T-cell (primary cell): ENCODE measurements at regions of chr14 and their contacts with region 1.

Region 1: GRCh38 chr14:22531451-22532344 is 57.3 kb downstream of the DAD1 start:
- DNase-seq: peak in 2 of 35 experiments; percentile 25 to 58
- ATAC-seq: peak; percentile 53 to 63 (median 56)
- H3K4me3 ChIP-seq: peak overlapping the region; percentile 38 to 40
- H3K4me3 Mint-ChIP-seq: peak overlapping the region; percentile 74 to 86 (median 85)
- H3K27ac ChIP-seq: peak overlapping the region; percentile 88
- H3K27ac Mint-ChIP-seq: peak overlapping the region; percentile 93 to 99
- H3K4me1 ChIP-seq: peaks cover 74 to 79% of the 10 kb centered on the region in 2 experiments
- H3K4me1 Mint-ChIP-seq: peaks cover 90 to 91% (median 91%) of the 10 kb centered on the region in 3 donors
- H3K27me3 ChIP-seq: no peaks in the 10 kb centered on the region
- H3K27me3 Mint-ChIP-seq: no peaks in the 10 kb centered on the region

Region 2: DNA sequence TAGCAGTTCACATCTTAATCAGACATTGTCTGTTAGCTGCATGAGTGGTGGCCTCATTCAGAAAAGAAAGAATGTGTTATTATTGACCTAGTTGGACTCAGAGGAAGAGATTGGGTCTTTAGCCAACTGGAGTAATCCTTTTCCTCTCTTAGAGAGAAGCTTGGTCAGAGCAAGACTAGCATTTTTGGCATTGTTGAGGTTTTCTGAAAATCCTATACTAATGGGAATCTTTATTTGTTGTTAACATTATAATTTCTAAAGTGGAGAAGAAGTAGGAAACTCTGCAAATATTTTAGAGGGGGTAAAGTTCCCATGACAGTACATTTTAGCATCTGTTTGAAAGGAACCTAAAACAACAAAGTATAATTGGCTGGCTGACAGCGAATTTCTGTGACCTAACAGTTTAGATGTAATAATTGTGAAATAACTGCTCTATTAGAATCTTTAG is 1045.0 kb before region 1 on chr14:
- CTCF ChIA-PET with region 1: no interaction called
- POLR2A ChIA-PET with region 1: interaction called in 1 of 2 experiments, 14 read pairs
- DNase-seq: no peak
- ATAC-seq: no peak
- H3K4me3 ChIP-seq: no peak overlapping the region
- H3K4me3 Mint-ChIP-seq: no peak overlapping the region
- H3K27ac ChIP-seq: no peak overlapping the region
- H3K27ac Mint-ChIP-seq: no peak overlapping the region
- H3K4me1 ChIP-seq: no peaks in the 10 kb centered on the region
- H3K4me1 Mint-ChIP-seq: peaks cover 8 to 13% (median 11%) of the 10 kb centered on the region in 3 donors
- H3K27me3 ChIP-seq: no peaks in the 10 kb centered on the region
- H3K27me3 Mint-ChIP-seq: no peaks in the 10 kb centered on the region

Region 3: DNA sequence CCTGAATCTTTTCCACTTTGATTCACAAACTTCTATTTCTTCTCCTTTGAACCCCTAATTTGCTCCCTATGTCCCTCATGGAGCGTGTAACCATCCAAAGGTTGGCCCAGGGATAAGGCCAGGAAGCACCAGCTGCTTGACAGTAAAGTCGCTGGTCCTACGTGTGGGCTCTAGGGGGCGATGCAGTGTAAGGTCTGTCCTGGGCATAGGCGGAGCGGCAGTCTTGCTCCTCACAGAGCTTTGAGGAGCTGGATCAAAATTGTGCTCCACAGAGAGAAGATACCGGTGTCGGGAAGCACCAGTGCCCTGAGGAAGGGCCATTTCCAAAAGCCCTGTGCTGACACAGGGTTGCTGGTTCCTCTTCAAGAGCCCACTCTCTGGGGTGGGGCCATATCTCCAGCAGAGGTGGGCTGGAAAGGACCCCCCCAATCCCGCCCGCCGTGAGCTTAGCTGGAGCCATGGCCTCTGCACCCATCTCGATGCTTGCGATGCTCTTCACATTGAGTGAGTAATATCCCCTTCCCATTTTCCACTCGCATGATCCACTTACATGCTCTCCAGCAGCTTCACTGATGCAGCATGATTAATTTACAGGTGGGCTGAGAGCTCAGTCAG is 808.2 kb before region 1 on chr14:
- CTCF ChIA-PET with region 1: no interaction called
- POLR2A ChIA-PET with region 1: interaction called in 1 of 2 experiments, 11 read pairs
- DNase-seq: peak in 30 of 35 experiments; percentile 14 to 67 (median 26)
- ATAC-seq: peak; percentile 68 to 84 (median 76)
- H3K4me3 ChIP-seq: peak overlapping the region; percentile 3 to 36
- H3K4me3 Mint-ChIP-seq: peak overlapping the region; percentile 3 to 75 (median 73)
- H3K27ac ChIP-seq: no peak overlapping the region
- H3K27ac Mint-ChIP-seq: peak overlapping the region; percentile 71 to 73
- H3K4me1 ChIP-seq: no peaks in the 10 kb centered on the region
- H3K4me1 Mint-ChIP-seq: peaks cover 0 to 2% (median 0%) of the 10 kb centered on the region in 3 donors
- H3K27me3 ChIP-seq: peaks cover 2 to 8% of the 10 kb centered on the region in 2 experiments
- H3K27me3 Mint-ChIP-seq: peaks cover 23 to 29% of the 10 kb centered on the region in 2 donors

Region 4: DNA sequence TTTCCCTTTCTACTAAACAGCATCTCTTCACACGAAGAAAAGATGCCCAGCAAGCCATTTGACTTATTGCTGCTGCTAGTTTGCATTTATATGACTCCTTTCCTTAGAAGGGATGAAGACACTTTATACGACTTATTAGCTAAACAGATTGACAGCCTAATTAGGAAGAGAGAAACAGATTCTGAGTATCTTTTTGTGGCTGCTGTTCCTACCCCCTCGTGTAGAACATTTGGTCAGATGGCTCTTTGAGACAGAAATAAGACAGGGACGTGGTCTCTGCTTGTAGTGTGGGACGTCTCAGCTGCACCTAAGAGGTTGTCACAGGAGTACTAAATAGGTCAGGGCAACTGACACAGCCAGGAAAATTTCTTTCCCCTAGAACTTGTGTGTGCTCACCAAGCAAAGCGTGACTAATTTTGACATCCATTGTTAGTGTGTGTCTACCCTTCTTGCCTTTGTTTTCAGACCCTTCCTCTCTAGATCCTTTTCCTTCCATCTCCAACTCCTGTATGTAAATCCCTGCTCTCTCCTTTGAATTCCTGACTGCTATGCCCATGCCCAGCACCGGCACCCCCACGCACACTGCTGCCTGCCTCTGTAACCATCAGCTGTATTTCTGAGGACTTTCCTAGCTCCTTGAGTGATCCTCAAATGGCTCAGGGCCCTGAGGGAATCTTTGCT is 25.9 kb before region 1 on chr14:
- CTCF ChIA-PET with region 1: interaction called, 4 to 9 read pairs
- POLR2A ChIA-PET with region 1: interaction called, 4 to 45 read pairs
- DNase-seq: peak in 1 of 35 experiments; percentile 54
- ATAC-seq: peak; percentile 17 to 55 (median 46)
- H3K4me3 ChIP-seq: peak overlapping the region; percentile 52 to 58
- H3K4me3 Mint-ChIP-seq: peak overlapping the region; percentile 82 to 86 (median 83)
- H3K27ac ChIP-seq: peak overlapping the region; percentile 90
- H3K27ac Mint-ChIP-seq: peak overlapping the region; percentile 95 to 96
- H3K4me1 ChIP-seq: peaks cover 26 to 55% of the 10 kb centered on the region in 2 experiments
- H3K4me1 Mint-ChIP-seq: peaks cover 55 to 84% (median 75%) of the 10 kb centered on the region in 3 donors
- H3K27me3 ChIP-seq: no peaks in the 10 kb centered on the region
- H3K27me3 Mint-ChIP-seq: no peaks in the 10 kb centered on the region

Region 5: GRCh38 chr14:22519877-22520685 is 11.6 kb before region 1 on chr14:
- CTCF ChIA-PET with region 1: interaction called in 1 of 2 experiments, 8 read pairs
- POLR2A ChIA-PET with region 1: interaction called, 6 to 10 read pairs
- DNase-seq: peak in 1 of 35 experiments; percentile 49
- ATAC-seq: peak; percentile 17 to 34 (median 22)
- H3K4me3 ChIP-seq: peak overlapping the region; percentile 47 to 60
- H3K4me3 Mint-ChIP-seq: peak overlapping the region; percentile 82 to 86 (median 84)
- H3K27ac ChIP-seq: peak overlapping the region; percentile 90
- H3K27ac Mint-ChIP-seq: peak overlapping the region; percentile 99
- H3K4me1 ChIP-seq: peaks cover 78 to 79% of the 10 kb centered on the region in 2 experiments
- H3K4me1 Mint-ChIP-seq: peaks cover 95 to 99% (median 96%) of the 10 kb centered on the region in 3 donors
- H3K27me3 ChIP-seq: no peaks in the 10 kb centered on the region
- H3K27me3 Mint-ChIP-seq: no peaks in the 10 kb centered on the region

Region 6: GRCh38 chr14:22549981-22550673 is 18.4 kb after region 1 on chr14:
- CTCF ChIA-PET with region 1: interaction called, 4 to 23 read pairs
- POLR2A ChIA-PET with region 1: interaction called, 6 to 17 read pairs
- DNase-seq: peak in 29 of 35 experiments; percentile 36 to 74 (median 57)
- ATAC-seq: peak; percentile 58 to 65 (median 63)
- H3K4me3 ChIP-seq: peak overlapping the region; percentile 18 to 35
- H3K4me3 Mint-ChIP-seq: peak overlapping the region; percentile 71 to 86 (median 77)
- H3K27ac ChIP-seq: peak overlapping the region; percentile 99
- H3K27ac Mint-ChIP-seq: peak overlapping the region; percentile 98 to 99
- H3K4me1 ChIP-seq: peaks cover 74 to 98% of the 10 kb centered on the region in 2 experiments
- H3K4me1 Mint-ChIP-seq: peaks cover 95 to 96% (median 95%) of the 10 kb centered on the region in 3 donors
- H3K27me3 ChIP-seq: no peaks in the 10 kb centered on the region
- H3K27me3 Mint-ChIP-seq: no peaks in the 10 kb centered on the region

Region 7: DNA sequence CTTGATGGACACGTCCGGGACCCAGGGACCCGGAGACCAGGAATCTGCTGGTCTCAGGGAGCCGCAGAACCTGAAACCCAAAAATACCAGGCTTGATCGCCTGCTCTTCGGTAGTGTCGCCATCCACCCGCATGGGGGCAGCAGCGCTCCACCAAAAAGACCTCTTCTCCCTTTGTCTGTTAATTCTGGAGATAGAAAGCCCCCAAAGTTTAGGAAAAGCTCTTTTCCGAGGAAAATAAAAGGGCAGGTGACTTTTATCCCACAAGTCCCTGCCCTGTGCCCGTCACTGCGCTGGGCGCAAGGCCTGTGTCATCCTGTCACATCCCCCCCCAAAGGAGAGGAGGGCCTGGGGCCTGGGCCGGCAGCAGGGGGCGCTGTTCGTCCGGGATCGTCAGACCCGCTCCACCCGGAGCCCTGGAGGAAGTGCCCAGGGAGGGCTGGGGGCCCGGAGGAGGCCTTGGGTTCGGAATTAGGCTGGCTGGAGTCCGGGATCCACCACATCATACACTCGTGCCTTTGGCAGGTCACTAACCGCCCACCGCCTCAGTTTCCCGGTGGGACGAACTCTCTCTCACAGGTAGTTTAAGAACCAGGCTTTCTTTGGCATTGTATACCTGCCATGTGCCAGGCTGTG is 25.4 kb after region 1 on chr14:
- CTCF ChIA-PET with region 1: interaction called, 3 to 23 read pairs
- POLR2A ChIA-PET with region 1: interaction called, 6 to 17 read pairs
- DNase-seq: peak; percentile 69 to 96 (median 89)
- ATAC-seq: peak; percentile 21 to 38 (median 29)
- H3K4me3 ChIP-seq: peak overlapping the region; percentile 47 to 58
- H3K4me3 Mint-ChIP-seq: peak overlapping the region; percentile 64 to 83 (median 79)
- H3K27ac ChIP-seq: peak overlapping the region; percentile 99
- H3K27ac Mint-ChIP-seq: peak overlapping the region; percentile 98 to 99
- H3K4me1 ChIP-seq: peaks cover 66 to 100% of the 10 kb centered on the region in 2 experiments
- H3K4me1 Mint-ChIP-seq: peaks cover 90 to 96% (median 91%) of the 10 kb centered on the region in 3 donors
- H3K27me3 ChIP-seq: no peaks in the 10 kb centered on the region
- H3K27me3 Mint-ChIP-seq: peaks cover 0 to 2% of the 10 kb centered on the region in 2 donors

Region 8: GRCh38 chr14:24067145-24068082 is 1535.7 kb after region 1 on chr14:
- CTCF ChIA-PET with region 1: no interaction called
- POLR2A ChIA-PET with region 1: no interaction called
- DNase-seq: no peak
- ATAC-seq: no peak
- H3K4me3 ChIP-seq: no peak overlapping the region
- H3K4me3 Mint-ChIP-seq: no peak overlapping the region
- H3K27ac ChIP-seq: no peak overlapping the region
- H3K27ac Mint-ChIP-seq: no peak overlapping the region
- H3K4me1 ChIP-seq: no peaks in the 10 kb centered on the region
- H3K4me1 Mint-ChIP-seq: no peaks in the 10 kb centered on the region
- H3K27me3 ChIP-seq: peaks cover 0 to 44% of the 10 kb centered on the region in 2 experiments
- H3K27me3 Mint-ChIP-seq: peaks cover 6 to 14% of the 10 kb centered on the region in 2 donors